ENCODE measurements at regions of chr4 and their contacts with region 1.

Region 1: DNA sequence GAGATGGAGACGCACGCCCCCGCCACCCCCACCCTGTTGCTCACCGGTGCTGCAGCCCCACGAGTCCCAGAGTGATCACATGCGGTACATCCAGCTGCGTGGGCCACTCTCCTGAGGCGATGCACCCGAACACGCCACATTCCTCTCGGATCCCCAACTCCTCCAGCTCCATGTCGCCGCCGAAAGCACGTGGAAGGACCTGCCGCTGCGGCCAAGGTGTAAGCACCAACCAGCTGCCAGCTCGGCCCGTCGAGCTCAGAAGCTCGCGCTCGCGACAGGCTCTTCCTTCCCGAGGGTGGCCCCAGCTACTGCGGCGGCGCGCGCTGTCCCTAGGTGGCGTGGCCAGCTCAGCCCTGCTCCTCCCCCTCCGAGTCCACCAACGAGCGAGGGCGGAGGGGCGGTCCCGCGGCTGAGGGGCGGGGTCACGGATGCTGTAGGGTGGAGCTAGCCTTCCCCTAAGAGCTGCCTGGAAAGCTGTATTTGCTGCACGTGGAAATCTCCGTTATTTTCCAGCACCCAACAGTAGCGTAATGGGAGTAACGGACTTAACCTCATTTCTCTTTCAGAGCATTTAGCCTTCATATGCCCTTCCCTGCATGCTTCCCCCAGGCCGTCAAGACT is at the start of gene PPAT:
- DNase-seq: peak; percentile 98
- H3K4me3 ChIP-seq: peak within 1 kb of the TSS; percentile 87
- H3K4me3 Mint-ChIP-seq: peak within 1 kb of the TSS; percentile 98
- H3K27ac Mint-ChIP-seq: peak within 1 kb of the TSS; percentile 96
- H3K4me1 ChIP-seq: no peaks in the 10 kb centered on the region
- H3K4me1 Mint-ChIP-seq: peaks cover 11% of the 10 kb centered on the region
- H3K27me3 ChIP-seq: no peaks in the 10 kb centered on the region
- H3K27me3 Mint-ChIP-seq: no peaks in the 10 kb centered on the region
- CTCF ChIP-seq: peak in 1 of 2 experiments; percentile 14
- total RNA-seq, gene PPAT: 55.6 and 60.7 TPM in 2 replicates

Region 2: GRCh38 chr4:55948726-55949474 is 486.5 kb before region 1 on chr4 and contains the start of gene CEP135:
- CTCF ChIA-PET with region 1: interaction called, 9 read pairs
- POLR2A ChIA-PET with region 1: interaction called, 3 read pairs
- intact Hi-C with region 1: loop called (anchors 1 kb)
- DNase-seq: peak; percentile 92 to 95
- H3K4me3 ChIP-seq: peak within 1 kb of the TSS; percentile 85
- H3K4me3 Mint-ChIP-seq: peak within 1 kb of the TSS; percentile 90
- H3K27ac Mint-ChIP-seq: peak within 1 kb of the TSS; percentile 93
- H3K4me1 ChIP-seq: 0 out of 2 replicates have a peak, but pooled peaks cover 10% of the 10 kb centered on the region
- H3K4me1 Mint-ChIP-seq: peaks cover 16% of the 10 kb centered on the region
- H3K27me3 ChIP-seq: no peaks in the 10 kb centered on the region
- H3K27me3 Mint-ChIP-seq: no peaks in the 10 kb centered on the region
- CTCF ChIP-seq: peak; percentile 80 to 90
- total RNA-seq, gene CEP135: 10.5 and 11.3 TPM in 2 replicates

Region 3: DNA sequence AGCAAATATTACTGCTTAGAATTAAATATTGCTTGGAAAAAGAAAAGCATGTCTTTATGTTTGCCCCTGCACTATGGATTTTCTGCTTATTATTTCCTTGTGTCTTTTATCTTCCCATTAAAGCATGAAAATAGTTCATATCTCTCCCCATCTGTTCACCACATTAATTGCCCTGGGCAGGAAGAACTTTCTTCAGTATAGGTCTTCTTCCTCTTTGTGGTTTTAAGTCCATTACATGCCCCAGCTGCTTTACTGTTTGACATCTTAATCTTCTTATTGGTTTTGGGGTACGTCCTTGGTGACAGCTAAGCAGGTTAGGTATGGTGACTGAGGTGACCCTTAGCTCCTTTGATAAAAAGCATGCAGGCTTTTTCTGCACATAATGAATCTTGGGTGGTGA is 205.5 kb before region 1 on chr4:
- CTCF ChIA-PET with region 1: no interaction called
- POLR2A ChIA-PET with region 1: no interaction called
- intact Hi-C with region 1: no loop called
- DNase-seq: no peak
- H3K4me3 ChIP-seq: no peak overlapping the region
- H3K4me3 Mint-ChIP-seq: no peak overlapping the region
- H3K27ac Mint-ChIP-seq: no peak overlapping the region
- H3K4me1 ChIP-seq: peaks cover 23% of the 10 kb centered on the region
- H3K4me1 Mint-ChIP-seq: peaks cover 26% of the 10 kb centered on the region
- H3K27me3 ChIP-seq: no peaks in the 10 kb centered on the region
- H3K27me3 Mint-ChIP-seq: no peaks in the 10 kb centered on the region
- CTCF ChIP-seq: no peak

Region 4: DNA sequence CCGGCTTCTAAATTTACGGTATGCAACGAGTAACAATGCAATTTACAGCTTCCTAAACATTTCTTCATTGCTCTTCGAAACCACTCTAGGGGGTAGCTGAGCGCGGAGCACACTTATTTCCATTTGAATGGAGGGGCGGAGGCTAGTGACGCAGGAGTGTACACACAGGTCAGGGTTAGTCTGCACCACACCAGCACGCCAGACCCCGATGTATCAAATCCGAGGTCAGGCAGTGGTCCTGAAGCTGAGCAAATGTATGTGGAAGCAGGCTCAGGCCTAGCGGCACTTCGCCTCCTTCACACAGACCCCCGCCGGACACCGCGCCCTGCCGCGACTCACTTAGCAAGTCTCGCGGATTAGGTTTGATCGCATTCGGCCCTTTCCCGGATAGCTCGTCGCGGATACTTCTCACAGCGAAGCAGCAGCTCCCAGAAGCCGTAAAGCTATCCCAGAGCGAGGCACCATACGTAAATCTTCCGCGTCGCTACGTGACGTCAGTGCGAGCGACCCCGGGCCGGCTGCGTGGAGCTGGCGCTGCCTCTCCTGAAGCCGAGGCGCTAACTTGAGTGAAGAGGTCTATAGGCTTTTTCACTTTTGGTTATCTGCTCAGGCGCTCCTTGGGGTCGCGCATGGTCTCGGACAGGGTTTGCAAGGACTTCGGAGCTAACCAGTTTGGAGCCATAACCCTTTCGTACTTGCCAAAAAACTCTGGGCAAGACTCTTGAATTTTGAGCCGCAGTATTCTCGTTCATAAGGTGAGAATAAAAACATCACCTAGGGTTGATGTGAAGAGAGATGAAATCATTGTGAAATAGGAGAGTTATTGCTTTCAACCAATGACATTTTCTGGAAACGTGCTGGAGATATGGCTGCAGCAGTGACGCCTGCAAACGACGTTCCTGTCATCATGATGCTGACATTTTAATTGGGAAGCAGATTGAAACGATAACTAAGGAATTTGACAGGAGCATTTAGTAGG is 48.1 kb before region 1 on chr4 and contains the start of gene AASDH:
- CTCF ChIA-PET with region 1: interaction called, 11 read pairs
- POLR2A ChIA-PET with region 1: interaction called, 50 read pairs
- intact Hi-C with region 1: loop called (anchors 1 kb)
- DNase-seq: peak; percentile 94 to 95
- H3K4me3 ChIP-seq: peak within 1 kb of the TSS; percentile 73
- H3K4me3 Mint-ChIP-seq: peak within 1 kb of the TSS; percentile 94
- H3K27ac Mint-ChIP-seq: peak within 1 kb of the TSS; percentile 99
- H3K4me1 ChIP-seq: no peaks in the 10 kb centered on the region; the same call in none of the 2 replicates
- H3K4me1 Mint-ChIP-seq: peaks cover 30% of the 10 kb centered on the region
- H3K27me3 ChIP-seq: no peaks in the 10 kb centered on the region
- H3K27me3 Mint-ChIP-seq: no peaks in the 10 kb centered on the region
- CTCF ChIP-seq: no peak
- total RNA-seq, gene AASDH: 12.8 and 13.7 TPM in 2 replicates

Region 5: GRCh38 chr4:56410235-56411062 is 25.0 kb before region 1 on chr4:
- CTCF ChIA-PET with region 1: interaction called, 3 read pairs
- POLR2A ChIA-PET with region 1: interaction called, 11 read pairs
- intact Hi-C with region 1: loop called (anchors 1 kb)
- DNase-seq: peak; percentile 52 to 77
- H3K4me3 ChIP-seq: no peak overlapping the region; the same call in 1 of the 2 replicates
- H3K4me3 Mint-ChIP-seq: peak overlapping the region; percentile 38
- H3K27ac Mint-ChIP-seq: peak overlapping the region; percentile 95
- H3K4me1 ChIP-seq: peaks cover 20% of the 10 kb centered on the region
- H3K4me1 Mint-ChIP-seq: peaks cover 6% of the 10 kb centered on the region
- H3K27me3 ChIP-seq: no peaks in the 10 kb centered on the region
- H3K27me3 Mint-ChIP-seq: no peaks in the 10 kb centered on the region
- CTCF ChIP-seq: no peak

Region 6: GRCh38 chr4:56467284-56468096 is 32.1 kb after region 1 on chr4 and contains the start of gene SRP72:
- CTCF ChIA-PET with region 1: interaction called, 3 read pairs
- POLR2A ChIA-PET with region 1: interaction called, 17 read pairs
- intact Hi-C with region 1: loop called (anchors 2 kb)
- DNase-seq: peak; percentile 92
- H3K4me3 ChIP-seq: peak within 1 kb of the TSS; percentile 76
- H3K4me3 Mint-ChIP-seq: peak within 1 kb of the TSS; percentile 99
- H3K27ac Mint-ChIP-seq: peak within 1 kb of the TSS; percentile 99
- H3K4me1 ChIP-seq: peaks cover 20% of the 10 kb centered on the region
- H3K4me1 Mint-ChIP-seq: peaks cover 6% of the 10 kb centered on the region
- H3K27me3 ChIP-seq: no peaks in the 10 kb centered on the region
- H3K27me3 Mint-ChIP-seq: no peaks in the 10 kb centered on the region
- CTCF ChIP-seq: no peak
- total RNA-seq, gene SRP72: 116 and 126 TPM in 2 replicates

Region 7: DNA sequence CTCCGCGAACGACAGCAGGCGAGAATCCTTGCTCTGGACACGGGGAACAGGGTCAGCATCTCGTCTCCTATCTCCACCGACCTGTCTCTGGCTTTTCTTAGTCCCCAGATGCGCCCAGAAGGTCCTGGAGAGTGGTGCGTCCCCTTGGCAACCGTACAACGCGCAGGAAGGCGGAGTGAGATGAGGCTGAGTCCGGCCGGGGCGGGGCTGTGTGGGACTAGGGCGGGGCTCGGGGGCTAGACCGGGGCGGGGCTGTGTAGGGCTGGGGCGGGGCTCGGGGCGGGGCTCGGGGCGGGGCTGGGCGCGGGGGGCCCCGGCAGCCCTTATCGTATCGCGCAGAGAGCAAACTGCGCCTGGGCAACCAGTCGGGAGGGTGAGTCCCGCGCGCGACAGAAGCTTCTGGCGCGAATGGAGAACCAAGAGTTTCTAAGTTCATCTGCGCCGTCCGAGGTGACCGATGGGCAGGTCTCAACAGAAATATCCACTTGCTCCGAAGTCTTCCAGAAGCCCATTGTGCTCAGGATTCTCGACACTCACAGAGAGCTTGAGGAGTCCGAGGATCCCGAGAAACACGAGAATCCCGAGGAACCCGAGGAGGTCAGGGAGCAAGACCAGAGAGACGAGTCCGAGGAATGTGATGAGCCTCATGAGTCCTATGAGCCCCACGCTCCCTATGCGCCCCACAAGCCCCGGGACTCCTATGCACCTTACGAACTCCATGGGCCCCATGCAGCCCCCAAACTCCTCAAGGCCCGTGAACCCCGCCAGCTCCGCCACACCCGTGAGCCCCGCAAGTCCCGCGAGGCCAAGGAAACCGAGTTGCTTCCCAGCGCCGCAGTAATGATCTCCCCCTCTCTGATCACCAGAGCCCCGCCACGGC is 95.1 kb after region 1 on chr4:
- CTCF ChIA-PET with region 1: no interaction called
- POLR2A ChIA-PET with region 1: no interaction called
- intact Hi-C with region 1: no loop called
- DNase-seq: peak; percentile 82
- H3K4me3 ChIP-seq: peak overlapping the region; percentile 42
- H3K4me3 Mint-ChIP-seq: no peak overlapping the region
- H3K27ac Mint-ChIP-seq: no peak overlapping the region
- H3K4me1 ChIP-seq: no peaks in the 10 kb centered on the region
- H3K4me1 Mint-ChIP-seq: no peaks in the 10 kb centered on the region
- H3K27me3 ChIP-seq: no peaks in the 10 kb centered on the region
- H3K27me3 Mint-ChIP-seq: peaks cover 4% of the 10 kb centered on the region
- CTCF ChIP-seq: no peak

Region 8: DNA sequence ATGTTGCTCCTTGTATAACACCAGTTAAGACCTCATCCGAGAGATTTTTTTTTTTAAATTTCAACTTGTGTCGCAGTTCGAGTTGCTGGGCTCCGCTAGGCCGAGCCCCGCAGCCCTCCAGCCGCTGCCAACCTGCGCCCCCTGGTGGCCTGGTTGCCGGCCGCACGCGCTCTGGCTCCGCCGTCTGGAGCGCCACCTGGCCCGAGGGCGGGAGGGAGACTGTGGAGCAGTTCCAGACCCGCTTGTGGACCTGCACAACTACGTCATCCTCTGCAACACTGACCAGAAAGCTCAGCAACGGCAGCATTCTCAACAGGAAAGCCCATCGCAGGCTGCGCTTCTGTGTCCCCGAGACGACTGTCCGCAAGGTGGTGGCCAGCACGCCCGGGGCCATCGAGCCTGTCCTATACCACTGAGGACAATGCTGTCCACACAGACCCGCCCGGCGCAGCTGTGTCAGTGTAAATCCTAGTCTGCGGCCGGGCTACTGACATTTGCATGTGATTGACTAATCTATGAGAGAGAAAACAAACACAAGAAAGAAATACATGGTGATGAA is 109.2 kb after region 1 on chr4:
- CTCF ChIA-PET with region 1: interaction called, 4 read pairs
- POLR2A ChIA-PET with region 1: no interaction called
- intact Hi-C with region 1: loop called (anchors 5 kb)
- DNase-seq: peak; percentile 83 to 95
- H3K4me3 ChIP-seq: peak overlapping the region; percentile 30
- H3K4me3 Mint-ChIP-seq: peak overlapping the region; percentile 73
- H3K27ac Mint-ChIP-seq: no peak overlapping the region
- H3K4me1 ChIP-seq: 0 out of 2 replicates have a peak, but pooled peaks cover 4% of the 10 kb centered on the region
- H3K4me1 Mint-ChIP-seq: peaks cover 5% of the 10 kb centered on the region
- H3K27me3 ChIP-seq: no peaks in the 10 kb centered on the region
- H3K27me3 Mint-ChIP-seq: peaks cover 8% of the 10 kb centered on the region
- CTCF ChIP-seq: peak; percentile 87 to 94

Region 9: DNA sequence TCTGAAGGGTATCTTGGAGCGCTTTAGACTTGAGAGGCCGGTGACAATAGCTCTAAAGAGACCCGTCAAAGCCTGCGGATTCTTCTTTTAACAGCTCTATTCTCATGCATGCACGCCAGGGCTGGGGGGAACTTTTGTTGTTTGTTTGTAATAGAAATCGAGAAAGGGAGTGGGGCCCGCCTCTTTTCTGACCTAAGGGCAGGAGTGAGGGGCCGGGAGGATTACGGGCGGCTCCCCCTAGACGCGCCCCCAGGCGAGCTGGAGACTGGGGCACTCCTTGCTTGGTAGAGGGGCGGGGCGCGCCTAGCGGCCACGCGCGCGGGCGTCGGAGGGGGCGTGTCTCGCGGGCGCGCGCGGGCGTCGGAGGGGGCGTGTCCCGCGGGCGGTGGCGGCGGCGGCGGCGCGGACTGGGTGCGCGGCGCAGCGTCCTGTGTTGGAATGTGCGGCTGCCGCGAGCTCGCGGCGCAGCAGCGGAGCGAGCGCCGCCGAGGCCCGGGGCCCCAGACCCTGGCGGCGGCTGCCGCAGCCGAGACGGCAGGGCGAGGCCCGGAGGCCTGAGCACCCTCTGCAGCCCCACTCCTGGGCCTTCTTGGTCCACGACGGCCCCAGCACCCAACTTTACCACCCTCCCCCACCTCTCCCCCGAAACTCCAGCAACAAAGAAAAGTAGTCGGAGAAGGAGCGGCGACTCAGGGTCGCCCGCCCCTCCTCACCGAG is 472.2 kb after region 1 on chr4 and contains the start of gene REST:
- CTCF ChIA-PET with region 1: no interaction called
- POLR2A ChIA-PET with region 1: no interaction called
- intact Hi-C with region 1: loop called (anchors 10 kb)
- DNase-seq: peak; percentile 74 to 88
- H3K4me3 ChIP-seq: peak within 1 kb of the TSS; percentile 95
- H3K4me3 Mint-ChIP-seq: peak within 1 kb of the TSS; percentile 92
- H3K27ac Mint-ChIP-seq: peak within 1 kb of the TSS; percentile 97
- H3K4me1 ChIP-seq: peaks cover 21% of the 10 kb centered on the region
- H3K4me1 Mint-ChIP-seq: peaks cover 32% of the 10 kb centered on the region
- H3K27me3 ChIP-seq: no peaks in the 10 kb centered on the region
- H3K27me3 Mint-ChIP-seq: no peaks in the 10 kb centered on the region
- CTCF ChIP-seq: no peak
- total RNA-seq, gene REST: 49.3 and 56.6 TPM in 2 replicates

Measured in Caco-2 (cell line).